ENCODE measurements at regions of chr4 and their contacts with region 1.

Region 1: DNA sequence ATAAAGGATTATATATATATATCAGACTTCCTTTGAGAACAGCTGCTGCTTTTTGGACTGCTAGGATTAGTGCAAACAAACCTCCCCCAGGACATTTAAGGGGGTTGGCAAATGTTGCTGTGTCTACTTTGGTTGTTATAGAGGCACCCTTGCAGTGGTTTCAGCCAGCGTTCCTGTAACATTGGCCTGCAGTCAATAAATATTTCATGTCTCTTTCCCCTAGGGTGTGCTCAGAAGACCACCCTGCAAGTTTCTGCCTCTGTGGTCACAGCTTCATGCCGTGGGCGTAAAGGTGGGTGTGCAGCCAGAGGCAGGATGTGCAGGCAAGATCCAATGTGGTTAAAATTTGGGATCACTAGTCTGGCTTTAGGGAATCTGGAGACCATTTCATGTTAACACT is 28.9 kb downstream of the FGF5 start:
- DNase-seq: no peak
- ATAC-seq: no peak
- H3K4me3 ChIP-seq: no peak overlapping the region
- H3K27ac ChIP-seq: no peak overlapping the region
- H3K4me1 ChIP-seq: no peaks in the 10 kb centered on the region
- H3K27me3 ChIP-seq: no peaks in the 10 kb centered on the region
- CTCF ChIP-seq: no peak

Region 2: DNA sequence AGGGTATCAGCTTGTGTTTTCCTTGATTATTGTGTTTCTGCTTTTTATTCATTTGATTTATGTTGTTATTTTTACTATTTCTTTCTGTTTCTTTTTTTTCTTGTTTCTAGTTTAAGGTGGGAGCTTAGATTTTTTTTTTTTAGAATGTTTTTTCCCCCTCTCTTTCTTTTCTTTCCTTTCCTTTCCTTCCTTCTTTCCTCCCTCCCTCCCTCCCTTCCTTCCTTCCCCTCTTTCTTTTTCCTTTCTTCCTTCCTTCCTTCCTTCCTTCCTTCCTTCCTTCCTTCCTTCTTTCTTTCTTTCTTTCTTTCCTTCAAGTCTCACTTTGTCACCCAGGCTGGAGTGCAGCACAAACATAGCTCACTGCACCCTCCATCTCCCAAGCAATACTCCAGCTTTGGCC is 129.5 kb before region 1 on chr4:
- CTCF ChIA-PET with region 1: no interaction called
- POLR2A ChIA-PET with region 1: interaction called, 14 read pairs
- in situ Hi-C with region 1: no loop called
- intact Hi-C with region 1: no loop called
- DNase-seq: no peak
- ATAC-seq: no peak
- H3K4me3 ChIP-seq: no peak overlapping the region
- H3K27ac ChIP-seq: no peak overlapping the region
- H3K4me1 ChIP-seq: no peaks in the 10 kb centered on the region
- H3K27me3 ChIP-seq: no peaks in the 10 kb centered on the region
- CTCF ChIP-seq: no peak